Transverse colon (tissue), 4 donors: ENCODE measurements at regions of chr4 and their contacts with region 1.

Region 1: GRCh38 chr4:108018040-108018883 is 28.6 kb downstream of the HADH start:
- DNase-seq: peak; percentile 83
- H3K4me3 ChIP-seq: no peak overlapping the region
- H3K27ac ChIP-seq: no peak overlapping the region
- H3K4me1 ChIP-seq: peaks cover 0 to 6% (median 0%) of the 10 kb centered on the region in 4 donors
- H3K27me3 ChIP-seq: no peaks in the 10 kb centered on the region
- CTCF ChIP-seq: peak; percentile 78 to 91 (median 86)
- EP300 ChIP-seq: no peak
- POLR2A ChIP-seq: no peak

Region 2: DNA sequence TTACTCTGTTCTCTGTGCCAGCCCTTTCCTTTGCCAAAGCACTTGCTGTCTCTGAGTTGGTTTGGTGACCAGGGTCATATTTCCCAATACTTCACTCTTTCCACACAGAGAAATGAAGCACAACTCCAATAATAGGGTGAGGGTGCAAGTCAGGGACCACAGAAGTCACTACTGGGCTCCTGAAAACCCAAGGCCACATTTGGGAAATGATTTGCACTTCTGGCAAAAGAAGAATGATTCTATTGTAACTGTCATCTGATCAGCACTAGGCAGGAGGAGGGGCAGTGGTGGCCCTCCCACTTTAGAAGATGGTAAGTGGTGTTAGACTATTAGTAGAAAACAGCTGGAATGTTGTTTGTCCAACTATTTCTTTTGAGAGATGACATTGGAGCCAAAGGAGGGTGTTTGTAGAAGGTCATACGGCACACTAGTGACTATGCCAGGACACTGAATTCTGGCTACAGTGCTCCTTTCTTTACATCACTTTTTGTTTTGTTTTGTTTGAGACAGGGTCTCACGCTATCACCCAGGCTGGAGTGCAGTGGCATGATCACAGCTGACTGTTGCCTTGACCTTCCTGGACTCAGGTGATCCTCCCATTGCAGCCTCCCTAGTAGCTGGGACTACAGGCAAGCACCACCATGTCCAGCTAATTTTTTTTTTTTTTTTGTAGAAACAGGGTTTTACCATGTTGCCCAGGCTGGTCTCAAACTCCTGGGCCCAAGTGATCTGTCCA is 39.4 kb before region 1 on chr4:
- in situ Hi-C with region 1: no loop called
- intact Hi-C with region 1: no loop called
- DNase-seq: no peak
- H3K4me3 ChIP-seq: no peak overlapping the region
- H3K27ac ChIP-seq: no peak overlapping the region
- H3K4me1 ChIP-seq: no peaks in the 10 kb centered on the region
- H3K27me3 ChIP-seq: no peaks in the 10 kb centered on the region
- CTCF ChIP-seq: no peak
- EP300 ChIP-seq: no peak
- POLR2A ChIP-seq: no peak

Region 3: GRCh38 chr4:108570993-108571569 is 552.8 kb after region 1 on chr4:
- in situ Hi-C with region 1: loop called in 2 of 4 experiments (anchors 5 kb)
- intact Hi-C with region 1: no loop called
- DNase-seq: no peak
- H3K4me3 ChIP-seq: no peak overlapping the region
- H3K27ac ChIP-seq: no peak overlapping the region
- H3K4me1 ChIP-seq: peaks cover 0 to 2% (median 0%) of the 10 kb centered on the region in 4 donors
- H3K27me3 ChIP-seq: no peaks in the 10 kb centered on the region
- CTCF ChIP-seq: no peak
- EP300 ChIP-seq: no peak
- POLR2A ChIP-seq: no peak